Upper lobe of right lung (tissue), 1 donor: ENCODE measurements at regions of chr3 and their contacts with region 1.

Region 1: GRCh38 chr3:71583566-71584449 is at the start of gene FOXP1:
- DNase-seq: peak; percentile 90
- ATAC-seq: peak; percentile 87
- H3K4me3 ChIP-seq: peak within 1 kb of the TSS; percentile 88
- H3K27ac ChIP-seq: peak within 1 kb of the TSS; percentile 96
- H3K4me1 ChIP-seq: peaks cover 31% of the 10 kb centered on the region
- H3K27me3 ChIP-seq: no peaks in the 10 kb centered on the region
- CTCF ChIP-seq: no peak
- total RNA-seq, gene FOXP1: 140 TPM

Region 2: GRCh38 chr3:71050538-71051258 is 533.1 kb before region 1 on chr3:
- intact Hi-C with region 1: loop called (anchors 10 kb)
- DNase-seq: no peak
- ATAC-seq: no peak
- H3K4me3 ChIP-seq: no peak overlapping the region
- H3K27ac ChIP-seq: peak overlapping the region; percentile 65
- H3K4me1 ChIP-seq: peaks cover 42% of the 10 kb centered on the region
- H3K27me3 ChIP-seq: no peaks in the 10 kb centered on the region
- CTCF ChIP-seq: no peak

Region 3: GRCh38 chr3:71487418-71487817 is 96.4 kb before region 1 on chr3:
- intact Hi-C with region 1: no loop called
- DNase-seq: no peak
- ATAC-seq: no peak
- H3K4me3 ChIP-seq: no peak overlapping the region
- H3K27ac ChIP-seq: no peak overlapping the region
- H3K4me1 ChIP-seq: no peaks in the 10 kb centered on the region
- H3K27me3 ChIP-seq: no peaks in the 10 kb centered on the region
- CTCF ChIP-seq: no peak

Region 4: GRCh38 chr3:71629711-71630110 is 45.9 kb after region 1 on chr3:
- intact Hi-C with region 1: no loop called
- DNase-seq: no peak
- ATAC-seq: peak; percentile 89
- H3K4me3 ChIP-seq: no peak overlapping the region
- H3K27ac ChIP-seq: no peak overlapping the region
- H3K4me1 ChIP-seq: no peaks in the 10 kb centered on the region
- H3K27me3 ChIP-seq: no peaks in the 10 kb centered on the region
- CTCF ChIP-seq: no peak

Region 5: GRCh38 chr3:72571638-72572208 is 987.9 kb after region 1 on chr3:
- intact Hi-C with region 1: no loop called
- DNase-seq: no peak
- ATAC-seq: no peak
- H3K4me3 ChIP-seq: no peak overlapping the region
- H3K27ac ChIP-seq: no peak overlapping the region
- H3K4me1 ChIP-seq: no peaks in the 10 kb centered on the region
- H3K27me3 ChIP-seq: no peaks in the 10 kb centered on the region
- CTCF ChIP-seq: no peak